ENCODE measurements at regions of chr3 and their contacts with region 1.

Region 1: GRCh38 chr3:134308350-134308891 is 57.8 kb upstream of the RYK start:
- DNase-seq: peak; percentile 59
- H3K4me3 ChIP-seq: peak overlapping the region; percentile 31; the same call in 1 of the 2 replicates
- H3K27ac ChIP-seq: peak overlapping the region; percentile 52
- H3K27me3 ChIP-seq: no peaks in the 10 kb centered on the region
- CTCF ChIP-seq: peak; percentile 100

Region 2: DNA sequence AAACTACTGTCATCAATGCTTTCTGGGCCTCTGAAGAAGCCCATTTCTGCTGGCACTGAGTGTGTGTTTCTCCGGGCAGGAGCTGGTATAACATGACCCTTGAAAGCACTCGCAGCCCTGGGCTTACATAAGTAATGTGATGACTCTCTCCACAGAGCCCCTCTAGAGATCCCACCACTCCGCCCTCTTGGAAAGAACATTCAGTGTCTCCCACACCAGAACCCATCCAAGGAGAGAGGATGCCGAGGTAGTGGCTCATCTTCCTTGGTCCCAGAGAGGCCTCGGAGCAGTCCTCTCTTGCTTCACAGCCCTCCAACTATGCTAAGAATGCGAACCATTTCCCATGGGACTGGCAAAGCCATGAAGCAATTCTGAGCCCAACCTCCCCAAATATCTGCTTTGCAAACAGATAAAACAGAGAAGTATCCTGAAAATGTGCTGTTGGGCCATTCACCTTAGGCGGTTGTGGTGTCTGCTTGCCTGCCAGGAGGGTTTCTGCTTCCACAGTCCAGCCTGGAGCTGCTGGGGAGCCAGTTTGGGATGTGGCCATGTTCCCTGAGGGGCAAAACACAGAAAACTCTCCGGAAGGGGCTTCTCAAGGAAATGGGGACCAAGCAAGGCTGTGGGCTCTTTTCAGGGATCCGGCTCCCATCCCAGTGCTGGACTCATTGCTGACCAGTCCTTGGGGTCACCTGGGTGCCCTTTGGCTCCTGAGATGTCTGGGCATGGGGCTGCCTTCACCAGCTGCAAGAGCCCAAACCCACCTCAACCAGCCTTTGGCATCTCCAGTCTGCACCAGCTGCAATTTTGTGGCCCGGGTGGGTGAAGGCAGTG is 18.6 kb after region 1 on chr3:
- CTCF ChIA-PET with region 1: interaction called, 5 read pairs
- POLR2A ChIA-PET with region 1: interaction called, 14 read pairs
- DNase-seq: peak; percentile 94
- H3K4me3 ChIP-seq: no peak overlapping the region
- H3K27ac ChIP-seq: peak overlapping the region; percentile 99
- H3K27me3 ChIP-seq: no peaks in the 10 kb centered on the region
- CTCF ChIP-seq: no peak

Region 3: GRCh38 chr3:134364061-134364935 is 55.9 kb after region 1 on chr3:
- CTCF ChIA-PET with region 1: interaction called, 55 read pairs
- POLR2A ChIA-PET with region 1: interaction called, 90 read pairs
- DNase-seq: peak; percentile 93
- H3K4me3 ChIP-seq: peak overlapping the region; percentile 38
- H3K27ac ChIP-seq: peak overlapping the region; percentile 96
- H3K27me3 ChIP-seq: no peaks in the 10 kb centered on the region
- CTCF ChIP-seq: no peak

Region 4: GRCh38 chr3:134427400-134428145 is 119.2 kb after region 1 on chr3:
- CTCF ChIA-PET with region 1: interaction called, 10 read pairs
- POLR2A ChIA-PET with region 1: no interaction called
- DNase-seq: peak; percentile 99
- H3K4me3 ChIP-seq: no peak overlapping the region; the same call in 1 of the 2 replicates
- H3K27ac ChIP-seq: peak overlapping the region; percentile 98
- H3K27me3 ChIP-seq: no peaks in the 10 kb centered on the region
- CTCF ChIP-seq: 0 out of 2 replicates have a peak, but pooled peaks have one; percentile 5

Region 5: GRCh38 chr3:134464064-134464697 is 155.8 kb after region 1 on chr3:
- CTCF ChIA-PET with region 1: interaction called, 12 read pairs
- POLR2A ChIA-PET with region 1: no interaction called
- DNase-seq: peak; percentile 96
- H3K4me3 ChIP-seq: peak overlapping the region; percentile 30
- H3K27ac ChIP-seq: peak overlapping the region; percentile 96
- H3K27me3 ChIP-seq: no peaks in the 10 kb centered on the region
- CTCF ChIP-seq: no peak

Region 6: DNA sequence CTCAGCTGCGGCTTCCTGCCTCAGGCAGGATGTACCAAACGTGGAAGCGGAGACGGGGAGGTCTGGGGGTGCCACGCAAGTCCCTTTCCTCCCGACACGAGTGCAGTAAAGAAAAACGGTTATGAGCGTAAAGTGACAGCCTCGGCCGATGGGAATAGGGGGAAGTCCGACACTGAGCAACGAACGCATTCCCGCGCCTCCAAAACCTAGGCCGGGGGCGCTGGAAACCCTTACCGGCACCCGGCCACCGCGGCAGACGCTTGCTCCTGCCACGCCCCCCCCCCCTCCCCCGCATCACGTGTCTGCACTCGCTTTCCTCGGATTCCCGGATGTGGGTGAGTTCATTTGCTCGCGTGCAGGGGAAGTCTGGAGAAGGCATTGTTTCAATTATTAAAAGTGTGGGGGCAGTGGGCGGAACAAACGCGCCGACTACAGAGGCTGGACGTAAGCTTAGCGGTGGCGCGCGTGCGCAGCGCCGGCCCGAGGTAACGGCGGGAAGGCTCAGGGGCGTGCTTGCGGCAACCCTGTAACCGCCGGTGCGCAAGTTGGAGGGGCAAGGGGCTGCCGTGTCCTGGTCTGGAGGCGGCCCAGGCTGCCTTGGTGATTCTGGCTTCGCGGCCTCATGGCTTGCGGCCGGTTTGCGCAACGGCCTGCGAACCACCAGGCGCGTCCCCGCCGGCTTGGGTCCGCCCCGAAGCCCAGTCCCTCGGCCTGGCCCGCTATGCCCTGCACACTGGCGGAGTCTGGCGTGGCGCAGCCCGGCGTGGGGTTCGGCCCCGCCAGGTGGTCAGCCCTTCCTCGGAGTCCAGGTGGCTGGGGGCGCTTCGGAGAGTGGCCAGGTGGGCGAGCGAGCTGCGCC is 177.5 kb after region 1 on chr3 and contains the starts of genes ANAPC13 and CEP63:
- CTCF ChIA-PET with region 1: interaction called, 306 read pairs
- POLR2A ChIA-PET with region 1: interaction called, 3 read pairs
- DNase-seq: peak; percentile 98
- H3K4me3 ChIP-seq: peak within 1 kb of the TSS; percentile 87
- H3K27ac ChIP-seq: peak within 1 kb of the TSS; percentile 97
- H3K27me3 ChIP-seq: no peaks in the 10 kb centered on the region
- CTCF ChIP-seq: no peak
- polyA plus RNA-seq, gene ANAPC13: 122 and 176 TPM in 2 replicates
- polyA plus RNA-seq, gene CEP63: 11.0 and 16.3 TPM in 2 replicates